Ascending aorta (tissue), 2 donors: ENCODE measurements at regions of chr11 and their contacts with region 1.

Region 1: DNA sequence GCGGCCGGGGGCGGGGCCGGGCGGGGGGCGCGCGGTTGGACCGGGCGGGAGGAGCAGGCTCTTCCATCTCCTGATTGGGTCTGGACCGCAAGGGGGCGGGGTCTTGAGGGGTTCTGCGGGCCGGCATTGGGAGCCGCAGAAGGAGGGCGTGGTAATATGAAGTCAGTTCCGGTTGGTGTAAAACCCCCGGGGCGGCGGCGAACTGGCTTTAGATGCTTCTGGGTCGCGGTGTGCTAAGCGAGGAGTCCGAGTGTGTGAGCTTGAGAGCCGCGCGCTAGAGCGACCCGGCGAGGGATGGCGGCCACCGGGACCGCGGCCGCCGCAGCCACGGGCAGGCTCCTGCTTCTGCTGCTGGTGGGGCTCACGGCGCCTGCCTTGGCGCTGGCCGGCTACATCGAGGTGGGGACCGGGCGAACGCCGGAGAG is at the start of gene APLP2:
- DNase-seq: peak; percentile 99 to 100
- H3K4me3 ChIP-seq: peak within 1 kb of the TSS; percentile 87 to 96
- H3K27ac ChIP-seq: peak within 1 kb of the TSS; percentile 92 to 98
- H3K4me1 ChIP-seq: peaks cover 11 to 12% of the 10 kb centered on the region in 2 donors
- H3K27me3 ChIP-seq: no peaks in the 10 kb centered on the region
- CTCF ChIP-seq: peak in 1 of 3 experiments; percentile 3
- total RNA-seq, gene APLP2: 216 TPM

Region 2: DNA sequence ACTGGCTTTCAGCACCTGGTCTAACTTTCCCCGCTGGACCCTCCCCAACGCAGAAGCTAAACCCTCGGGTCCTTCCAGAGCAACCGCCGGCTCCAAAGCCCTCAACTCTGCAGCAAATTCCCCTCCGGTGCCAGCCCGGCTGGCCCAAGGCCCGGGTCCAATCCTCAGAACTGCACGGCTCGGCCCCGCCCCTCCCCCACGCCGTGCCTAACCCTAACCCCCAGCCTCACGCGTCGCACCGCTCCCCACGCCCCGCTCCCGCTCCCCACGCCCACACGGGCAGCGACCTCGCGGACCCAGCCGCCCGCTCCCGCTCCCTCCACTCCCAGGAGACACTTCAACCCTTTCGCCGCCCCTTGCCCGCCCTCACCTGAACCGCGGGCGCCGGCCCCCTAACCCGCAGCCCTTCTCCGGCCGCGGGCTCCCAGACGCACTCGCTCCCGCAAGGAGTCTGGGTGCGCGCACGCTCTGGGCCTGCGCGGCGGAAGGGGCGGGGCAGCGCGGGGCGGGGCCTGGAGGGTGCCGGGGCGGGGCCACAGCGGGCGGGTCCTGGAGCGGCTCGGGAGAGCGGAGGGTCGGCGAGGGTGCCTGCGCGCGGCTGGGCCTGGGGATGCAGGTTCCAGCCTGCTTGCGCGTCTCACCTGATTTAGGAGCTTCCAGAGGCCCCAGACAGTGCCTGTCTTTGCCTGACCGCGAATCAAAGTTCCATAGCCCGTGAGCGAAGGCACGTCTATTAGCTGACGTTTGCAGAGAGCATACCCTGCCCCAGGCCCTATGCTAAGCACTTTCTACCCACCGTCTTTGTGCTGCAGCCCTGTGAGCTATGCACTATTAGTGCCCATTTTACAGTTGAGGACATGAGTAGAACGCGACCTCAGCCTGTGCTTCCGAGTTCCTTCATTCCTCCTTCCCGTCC is 174.3 kb before region 1 on chr11 and contains the start of gene NFRKB:
- intact Hi-C with region 1: loop called (anchors 2 kb)
- DNase-seq: peak in 1 of 2 donors; percentile 93
- H3K4me3 ChIP-seq: peak within 1 kb of the TSS; percentile 94 to 96
- H3K27ac ChIP-seq: peak within 1 kb of the TSS; percentile 60 to 78
- H3K4me1 ChIP-seq: peaks cover 0 to 9% of the 10 kb centered on the region in 2 donors
- H3K27me3 ChIP-seq: no peaks in the 10 kb centered on the region
- CTCF ChIP-seq: no peak
- total RNA-seq, gene NFRKB: 6.9 TPM

Region 3: DNA sequence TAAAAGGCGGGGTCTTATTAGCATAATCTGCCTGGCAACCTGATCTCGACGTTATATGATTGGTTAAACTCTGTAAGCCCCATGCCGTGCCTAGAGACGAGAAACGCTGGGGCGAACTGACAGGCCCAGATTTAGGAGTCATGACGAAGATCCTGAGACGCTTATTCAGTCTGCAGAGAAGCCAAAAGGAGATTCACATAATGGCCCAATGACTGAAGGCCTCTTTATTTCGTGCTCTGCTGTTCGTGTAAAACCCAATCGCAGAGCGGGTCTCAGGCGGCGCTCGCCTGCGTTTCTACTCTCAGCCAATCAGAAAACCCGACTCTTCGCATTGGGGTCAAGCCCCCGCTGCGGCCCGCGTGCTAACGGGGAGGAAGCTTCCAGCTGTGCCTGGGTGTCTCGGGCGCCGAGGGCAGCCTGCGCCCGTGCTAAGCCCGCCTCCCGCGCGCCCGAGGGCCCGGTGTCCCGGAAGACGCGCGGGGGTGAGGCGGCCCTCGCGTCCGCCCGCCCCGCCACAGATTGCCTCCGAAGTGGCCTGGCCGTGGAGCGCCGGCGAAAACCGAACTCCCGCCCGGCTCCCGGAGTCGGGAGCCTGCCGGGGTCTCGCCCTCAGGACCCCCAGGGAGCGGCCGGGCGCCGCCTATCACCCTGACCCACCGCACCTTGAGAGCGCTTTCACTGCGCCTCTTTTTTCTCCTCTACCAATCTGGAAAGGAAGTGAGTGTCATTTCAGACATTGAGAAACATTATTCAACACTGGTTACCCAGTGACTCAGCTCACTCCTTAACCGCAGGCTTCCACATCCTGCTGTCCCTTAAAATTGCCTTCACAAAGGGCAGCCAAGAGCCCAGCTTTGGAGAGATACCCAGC is 66.6 kb before region 1 on chr11:
- intact Hi-C with region 1: loop called (anchors 1 kb)
- DNase-seq: peak; percentile 76 to 97
- H3K4me3 ChIP-seq: peak overlapping the region; percentile 96 to 99
- H3K27ac ChIP-seq: peak overlapping the region; percentile 97 to 100
- H3K4me1 ChIP-seq: peaks cover 3 to 19% of the 10 kb centered on the region in 2 donors
- H3K27me3 ChIP-seq: no peaks in the 10 kb centered on the region
- CTCF ChIP-seq: no peak

Region 4: GRCh38 chr11:130042093-130042591 is 27.6 kb before region 1 on chr11:
- intact Hi-C with region 1: no loop called
- DNase-seq: no peak
- H3K4me3 ChIP-seq: no peak overlapping the region
- H3K27ac ChIP-seq: no peak overlapping the region
- H3K4me1 ChIP-seq: no peaks in the 10 kb centered on the region
- H3K27me3 ChIP-seq: no peaks in the 10 kb centered on the region
- CTCF ChIP-seq: no peak

Region 5: DNA sequence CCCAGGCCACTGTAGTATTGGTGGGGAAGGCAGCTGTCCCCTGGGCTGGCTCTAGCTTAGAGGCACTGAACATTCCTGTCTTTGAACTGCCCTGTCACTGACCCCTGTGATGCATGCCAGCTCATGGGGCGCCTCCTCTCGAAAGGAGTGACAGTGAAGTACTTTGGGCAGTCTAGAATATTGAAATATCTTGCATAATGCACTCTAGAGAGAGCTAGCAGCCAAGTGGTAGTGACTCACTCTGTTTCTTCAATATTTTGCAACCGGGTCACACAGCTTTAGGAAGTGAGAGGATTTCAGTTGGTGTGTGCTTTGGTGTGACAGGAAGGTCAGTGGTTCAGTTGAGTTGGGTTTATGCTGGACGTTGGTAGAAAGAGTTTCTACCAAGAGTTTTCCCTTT is 54.4 kb after region 1 on chr11:
- intact Hi-C with region 1: loop called (anchors 2 kb)
- DNase-seq: peak; percentile 67 to 89
- H3K4me3 ChIP-seq: no peak overlapping the region
- H3K27ac ChIP-seq: peak overlapping the region; percentile 60 to 74
- H3K4me1 ChIP-seq: peaks cover 0 to 21% of the 10 kb centered on the region in 2 donors
- H3K27me3 ChIP-seq: no peaks in the 10 kb centered on the region
- CTCF ChIP-seq: no peak

Region 6: GRCh38 chr11:130131961-130132850 is 62.5 kb after region 1 on chr11:
- intact Hi-C with region 1: loop called (anchors 2 kb)
- DNase-seq: peak in 1 of 2 donors; percentile 76
- H3K4me3 ChIP-seq: no peak overlapping the region
- H3K27ac ChIP-seq: no peak overlapping the region
- H3K4me1 ChIP-seq: no peaks in the 10 kb centered on the region
- H3K27me3 ChIP-seq: no peaks in the 10 kb centered on the region
- CTCF ChIP-seq: peak; percentile 72 to 81 (median 73)

Region 7: DNA sequence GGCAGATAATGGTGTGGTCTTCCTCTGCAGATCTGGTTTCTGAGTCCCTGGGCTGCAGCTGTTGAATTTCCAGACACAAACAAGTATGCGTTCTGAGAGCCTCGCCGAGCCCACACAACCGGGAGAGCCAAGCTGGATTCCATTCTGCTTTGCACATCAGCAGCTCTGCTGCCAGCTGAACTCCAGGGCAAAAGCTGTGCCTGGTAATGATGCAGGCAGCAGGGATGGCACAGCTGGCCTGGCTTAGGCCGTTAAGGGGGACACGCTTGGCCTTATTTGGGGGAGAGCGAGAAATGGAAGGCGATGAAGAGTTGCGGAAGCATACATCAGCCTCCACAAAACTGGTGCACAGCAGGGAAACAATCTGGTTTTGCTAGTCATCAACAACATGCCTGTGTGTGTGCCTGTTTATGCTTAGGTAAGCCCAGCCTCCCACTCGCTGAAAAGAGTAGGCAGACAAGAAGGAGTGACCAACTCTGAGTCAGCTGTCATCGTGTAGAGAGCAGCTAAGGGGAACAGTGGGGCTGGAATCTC is 333.6 kb after region 1 on chr11:
- intact Hi-C with region 1: loop called (anchors 2 kb)
- DNase-seq: peak; percentile 30 to 89
- H3K4me3 ChIP-seq: peak overlapping the region in 1 of 2 donors; percentile 12
- H3K27ac ChIP-seq: peak overlapping the region; percentile 87 to 92
- H3K4me1 ChIP-seq: peaks cover 12 to 36% of the 10 kb centered on the region in 2 donors
- H3K27me3 ChIP-seq: no peaks in the 10 kb centered on the region
- CTCF ChIP-seq: no peak

Region 8: GRCh38 chr11:130916238-130916855 is 846.7 kb after region 1 on chr11 and contains the start of gene SNX19:
- intact Hi-C with region 1: loop called (anchors 5 kb)
- DNase-seq: peak; percentile 52 to 94
- H3K4me3 ChIP-seq: peak within 1 kb of the TSS; percentile 72 to 99
- H3K27ac ChIP-seq: peak within 1 kb of the TSS; percentile 86 to 97
- H3K4me1 ChIP-seq: peaks cover 6 to 11% of the 10 kb centered on the region in 2 donors
- H3K27me3 ChIP-seq: no peaks in the 10 kb centered on the region
- CTCF ChIP-seq: peak; percentile 88 to 96 (median 93)
- total RNA-seq, gene SNX19: 137 TPM